Activated CD8-positive, alpha-beta T cell treated with anti-CD3 and anti-CD28 coated beads for 36 hours (primary cell): ENCODE measurements at regions of chr4 and their contacts with region 1.

Region 1: DNA sequence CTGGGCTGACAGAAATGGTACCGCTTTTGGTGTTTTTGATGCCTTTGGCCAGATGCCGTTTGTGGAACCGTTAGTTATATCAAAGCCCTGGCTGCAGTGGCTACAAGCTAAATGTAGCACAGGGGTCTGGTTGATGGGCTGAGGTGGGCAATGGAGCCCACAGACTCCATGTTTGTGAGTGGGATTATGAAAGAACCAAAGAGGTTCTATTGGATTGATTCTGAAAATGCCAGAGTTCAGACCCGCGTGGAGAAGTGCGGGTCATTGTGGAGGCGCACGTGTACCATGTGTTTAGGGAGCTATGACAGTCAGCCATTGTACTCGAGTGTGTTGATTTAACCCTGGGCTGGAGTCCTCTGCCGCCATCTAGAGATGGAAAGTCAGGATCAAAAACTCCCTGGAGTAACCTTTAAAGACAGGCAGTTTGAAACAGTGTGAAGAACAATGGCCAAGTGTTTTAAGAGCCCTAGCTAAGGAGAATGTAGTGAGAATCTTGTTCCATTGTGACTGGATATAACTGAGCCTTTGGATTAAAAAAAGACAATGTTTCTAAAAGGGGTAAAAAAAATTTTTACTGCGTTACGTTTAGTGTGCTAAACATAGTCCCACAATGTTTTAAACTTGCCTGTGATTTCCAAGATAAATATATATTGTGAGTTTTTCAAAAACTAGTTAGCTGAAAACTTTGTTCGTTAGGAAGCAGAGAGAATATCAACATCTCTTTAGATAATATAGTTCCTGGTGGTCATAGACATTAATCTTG is 12.7 kb downstream of the ART3 start:
- DNase-seq: peak; percentile 17
- ATAC-seq: peak; percentile 53
- H3K4me3 Mint-ChIP-seq: no peak overlapping the region
- H3K27ac Mint-ChIP-seq: no peak overlapping the region
- H3K4me1 Mint-ChIP-seq: peaks cover 3% of the 10 kb centered on the region
- H3K27me3 Mint-ChIP-seq: no peaks in the 10 kb centered on the region
- CTCF ChIP-seq: no peak

Region 2: DNA sequence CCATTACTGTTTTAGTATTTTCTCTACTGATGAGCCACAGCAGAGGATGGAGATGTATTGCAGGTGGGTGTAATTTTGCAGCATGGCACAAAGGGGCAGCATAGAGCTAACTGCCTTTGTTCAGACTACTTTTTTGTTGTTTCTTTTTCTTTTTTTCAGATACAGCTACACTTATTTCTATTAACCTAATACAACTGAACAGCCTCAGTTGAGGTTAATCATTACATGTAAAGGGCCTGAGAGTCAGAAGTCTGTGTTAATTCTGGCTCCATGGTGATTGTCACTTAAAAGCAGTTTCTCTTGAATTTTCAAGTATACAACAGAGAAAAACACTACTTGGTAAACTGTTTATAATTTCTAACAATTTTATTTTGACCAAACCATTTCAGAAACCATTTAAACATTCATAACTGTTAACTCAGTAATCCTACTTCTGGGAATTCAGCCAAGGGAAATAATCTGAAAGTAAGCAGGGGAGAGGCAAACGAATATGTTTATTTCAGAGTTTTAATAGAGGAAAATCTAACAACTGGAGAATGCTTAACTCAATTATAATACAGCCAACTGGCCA is 171.0 kb before region 1 on chr4:
- CTCF ChIA-PET with region 1: no interaction called
- POLR2A ChIA-PET with region 1: no interaction called
- intact Hi-C with region 1: loop called (anchors 10 kb)
- DNase-seq: peak; percentile 18
- ATAC-seq: peak; percentile 84
- H3K4me3 Mint-ChIP-seq: no peak overlapping the region
- H3K27ac Mint-ChIP-seq: no peak overlapping the region
- H3K4me1 Mint-ChIP-seq: no peaks in the 10 kb centered on the region
- H3K27me3 Mint-ChIP-seq: no peaks in the 10 kb centered on the region
- CTCF ChIP-seq: peak; percentile 76

Region 3: GRCh38 chr4:76074468-76074867 is 12.7 kb before region 1 on chr4 and contains the start of gene ART3:
- CTCF ChIA-PET with region 1: interaction called, 11 read pairs
- POLR2A ChIA-PET with region 1: no interaction called
- intact Hi-C with region 1: no loop called
- DNase-seq: no peak
- ATAC-seq: no peak
- H3K4me3 Mint-ChIP-seq: no peak within 1 kb of the TSS
- H3K27ac Mint-ChIP-seq: no peak within 1 kb of the TSS
- H3K4me1 Mint-ChIP-seq: no peaks in the 10 kb centered on the region
- H3K27me3 Mint-ChIP-seq: no peaks in the 10 kb centered on the region
- CTCF ChIP-seq: no peak
- total RNA-seq, gene ART3: not detected

Region 4: GRCh38 chr4:76194325-76194724 is 107.1 kb after region 1 on chr4:
- CTCF ChIA-PET with region 1: no interaction called
- POLR2A ChIA-PET with region 1: no interaction called
- intact Hi-C with region 1: no loop called
- DNase-seq: no peak
- ATAC-seq: no peak
- H3K4me3 Mint-ChIP-seq: no peak overlapping the region
- H3K27ac Mint-ChIP-seq: no peak overlapping the region
- H3K4me1 Mint-ChIP-seq: peaks cover 26% of the 10 kb centered on the region
- H3K27me3 Mint-ChIP-seq: no peaks in the 10 kb centered on the region
- CTCF ChIP-seq: no peak

Region 5: DNA sequence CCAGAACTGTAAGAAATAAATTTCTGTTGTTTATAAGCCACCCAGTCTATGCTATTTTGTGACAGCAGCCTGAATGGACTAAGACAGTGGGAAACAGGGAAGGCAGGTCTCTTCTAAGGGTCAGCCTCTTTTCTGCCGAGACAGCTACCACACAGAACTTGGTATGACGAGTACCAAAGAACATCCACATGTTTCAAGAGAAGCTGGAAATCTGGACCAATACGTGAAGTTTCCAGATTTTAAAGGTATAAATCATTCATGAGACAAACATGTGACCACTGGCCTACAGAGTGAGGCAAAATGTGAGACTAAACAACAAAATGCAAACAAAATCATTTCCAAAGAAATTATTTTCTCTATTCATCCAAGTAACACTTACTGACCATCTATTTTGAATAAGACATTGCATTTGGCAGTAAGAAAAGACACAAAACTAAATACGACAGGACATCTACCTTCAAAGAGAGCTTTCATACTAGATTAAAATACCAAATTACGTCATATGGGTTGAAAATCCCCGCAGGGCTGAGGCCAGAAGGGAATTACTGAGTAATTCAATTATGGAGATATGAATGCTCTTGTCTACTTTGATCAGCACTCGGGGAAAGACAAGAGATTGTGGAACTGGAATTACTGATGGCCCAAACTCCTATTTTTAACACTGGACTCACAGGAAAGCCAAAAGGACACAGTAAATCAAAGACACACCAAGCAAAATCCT is 119.2 kb after region 1 on chr4:
- CTCF ChIA-PET with region 1: no interaction called
- POLR2A ChIA-PET with region 1: no interaction called
- intact Hi-C with region 1: no loop called
- DNase-seq: no peak
- ATAC-seq: no peak
- H3K4me3 Mint-ChIP-seq: no peak overlapping the region
- H3K27ac Mint-ChIP-seq: no peak overlapping the region
- H3K4me1 Mint-ChIP-seq: peaks cover 28% of the 10 kb centered on the region
- H3K27me3 Mint-ChIP-seq: no peaks in the 10 kb centered on the region
- CTCF ChIP-seq: no peak